SK-N-SH (cell line): ENCODE measurements at regions of chr17 and their contacts with region 1.

Region 1: GRCh38 chr17:76868176-76868668 is at the start of gene MGAT5B:
- DNase-seq: peak; percentile 100
- H3K4me3 ChIP-seq: peak within 1 kb of the TSS; percentile 56 to 74
- H3K27ac ChIP-seq: peak within 1 kb of the TSS in 1 of 2 experiments; percentile 60; a peak in 2 of 4 replicates
- H3K4me1 ChIP-seq: peaks cover 17 to 36% of the 10 kb centered on the region in 2 experiments; a peak in 3 of 4 replicates
- H3K27me3 ChIP-seq: no peaks in the 10 kb centered on the region
- CTCF ChIP-seq: peak; percentile 80
- EP300 ChIP-seq: no peak; a peak in 1 of 4 replicates
- RAD21 ChIP-seq: peak; percentile 93
- polyA plus RNA-seq, gene MGAT5B: 10.3 and 13.8 TPM in 2 replicates

Region 2: DNA sequence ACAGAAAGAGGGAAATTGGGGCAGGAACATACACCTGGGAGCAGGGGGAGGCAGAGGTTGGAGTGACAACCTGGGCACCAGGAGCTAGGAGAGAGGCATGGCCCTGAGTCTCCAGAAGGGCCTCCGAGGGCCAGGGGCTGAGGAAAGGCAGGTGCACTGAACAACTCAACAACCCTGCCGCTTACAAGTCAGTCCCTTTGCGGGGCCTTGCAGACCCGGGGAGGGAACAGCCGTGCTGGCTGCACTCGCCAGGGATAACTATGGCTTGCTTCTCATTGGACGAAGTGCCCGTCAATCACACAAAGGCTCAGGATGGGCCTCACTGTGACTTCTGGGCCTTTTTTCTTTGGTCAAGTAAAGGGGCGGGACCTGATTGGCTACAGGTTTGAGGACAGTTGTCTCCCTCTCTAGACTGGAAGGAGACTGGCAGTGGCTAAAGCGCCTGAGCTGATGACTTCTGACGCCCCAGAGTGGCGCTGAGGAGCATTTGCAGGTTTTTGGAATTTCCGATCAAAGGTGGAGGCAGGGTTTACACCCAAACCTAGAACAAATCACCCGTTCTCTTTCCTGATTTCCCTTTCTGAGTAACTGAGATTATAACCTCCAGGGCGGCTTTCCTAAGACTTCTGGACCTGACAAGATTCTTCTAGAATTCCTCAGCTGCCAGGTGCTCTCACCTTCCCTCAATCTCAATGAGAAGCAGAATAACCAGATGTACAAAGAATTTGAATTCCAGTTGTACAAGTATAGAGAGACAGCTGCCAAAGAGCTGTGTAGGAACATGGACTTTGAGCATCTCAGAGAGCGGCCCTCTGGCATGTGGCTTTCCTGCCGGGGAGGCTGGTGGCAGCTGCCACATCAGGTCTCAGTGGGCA is 255.0 kb before region 1 on chr17:
- CTCF ChIA-PET with region 1: no interaction called
- POLR2A ChIA-PET with region 1: no interaction called
- DNase-seq: no peak
- H3K4me3 ChIP-seq: no peak overlapping the region
- H3K27ac ChIP-seq: no peak overlapping the region
- H3K4me1 ChIP-seq: no peaks in the 10 kb centered on the region; a peak in 1 of 4 replicates
- H3K27me3 ChIP-seq: no peaks in the 10 kb centered on the region; the same call in 1 of the 2 replicates
- CTCF ChIP-seq: no peak
- EP300 ChIP-seq: no peak
- RAD21 ChIP-seq: no peak

Region 3: DNA sequence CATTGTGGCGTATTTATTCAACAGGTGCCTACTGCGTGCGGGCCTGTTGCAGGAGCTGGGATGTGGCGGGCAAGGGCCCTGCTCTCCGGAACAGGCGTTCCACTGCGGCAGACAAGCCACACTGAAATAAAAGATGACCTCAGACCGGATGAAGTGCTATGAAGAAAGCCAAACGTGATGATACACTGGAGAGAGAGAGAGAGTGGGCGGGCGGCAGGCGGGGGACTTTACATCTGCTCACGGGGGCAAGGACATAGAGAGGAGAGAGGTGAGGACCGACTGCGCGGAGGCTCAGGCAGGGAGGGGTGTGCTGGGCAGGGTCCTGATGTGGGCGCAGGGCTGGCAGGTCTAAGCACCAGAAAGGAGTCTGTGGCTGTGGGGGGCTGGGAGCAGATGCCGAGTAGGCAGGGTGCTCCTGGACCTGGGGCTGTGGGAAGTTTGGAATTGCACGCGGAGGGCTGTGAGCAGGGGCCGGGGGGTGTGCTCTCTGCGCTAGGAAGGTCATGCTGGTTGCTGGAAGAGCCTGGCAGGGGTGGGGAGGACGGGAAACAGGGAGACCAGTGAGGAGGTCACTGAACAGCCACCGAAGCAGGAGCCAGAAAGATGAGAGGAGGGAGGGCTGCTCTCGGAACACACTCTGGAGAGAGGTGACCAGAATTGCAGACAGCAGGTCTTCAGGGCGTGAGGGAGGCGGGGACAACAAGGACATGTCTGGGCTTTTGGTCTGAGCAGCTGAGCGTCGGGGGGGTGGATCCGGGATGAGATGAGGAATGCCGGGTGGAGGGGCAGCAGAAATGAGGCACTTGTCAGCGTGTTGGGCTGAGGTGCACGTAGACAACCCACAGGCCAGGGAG is 167.4 kb before region 1 on chr17:
- CTCF ChIA-PET with region 1: no interaction called
- POLR2A ChIA-PET with region 1: no interaction called
- DNase-seq: peak; percentile 85
- H3K4me3 ChIP-seq: peak overlapping the region; percentile 24 to 50
- H3K27ac ChIP-seq: peak overlapping the region; percentile 78 to 84
- H3K4me1 ChIP-seq: peaks cover 26 to 45% of the 10 kb centered on the region in 2 experiments
- H3K27me3 ChIP-seq: no peaks in the 10 kb centered on the region
- CTCF ChIP-seq: no peak
- EP300 ChIP-seq: no peak; a peak in 1 of 4 replicates
- RAD21 ChIP-seq: no peak

Region 4: GRCh38 chr17:76826330-76827068 is 41.7 kb before region 1 on chr17:
- CTCF ChIA-PET with region 1: interaction called, 35 read pairs
- POLR2A ChIA-PET with region 1: no interaction called
- DNase-seq: peak; percentile 53
- H3K4me3 ChIP-seq: no peak overlapping the region
- H3K27ac ChIP-seq: no peak overlapping the region
- H3K4me1 ChIP-seq: peaks cover 0 to 4% of the 10 kb centered on the region in 2 experiments; a peak in 1 of 4 replicates
- H3K27me3 ChIP-seq: no peaks in the 10 kb centered on the region
- CTCF ChIP-seq: no peak
- EP300 ChIP-seq: no peak
- RAD21 ChIP-seq: no peak

Region 5: GRCh38 chr17:76879691-76880090 is 11.5 kb after region 1 on chr17:
- CTCF ChIA-PET with region 1: interaction called, 56 read pairs
- POLR2A ChIA-PET with region 1: interaction called, 4 read pairs
- DNase-seq: no peak
- H3K4me3 ChIP-seq: no peak overlapping the region
- H3K27ac ChIP-seq: no peak overlapping the region
- H3K4me1 ChIP-seq: no peaks in the 10 kb centered on the region
- H3K27me3 ChIP-seq: no peaks in the 10 kb centered on the region
- CTCF ChIP-seq: no peak
- EP300 ChIP-seq: no peak
- RAD21 ChIP-seq: no peak

Region 6: GRCh38 chr17:76924345-76925342 is 56.4 kb after region 1 on chr17:
- CTCF ChIA-PET with region 1: interaction called, 26 read pairs
- POLR2A ChIA-PET with region 1: no interaction called
- DNase-seq: peak; percentile 69
- H3K4me3 ChIP-seq: no peak overlapping the region
- H3K27ac ChIP-seq: no peak overlapping the region
- H3K4me1 ChIP-seq: peaks cover 0 to 12% of the 10 kb centered on the region in 2 experiments; a peak in 1 of 4 replicates
- H3K27me3 ChIP-seq: no peaks in the 10 kb centered on the region
- CTCF ChIP-seq: no peak
- EP300 ChIP-seq: no peak
- RAD21 ChIP-seq: no peak

Region 7: GRCh38 chr17:77011173-77012011 is 143.2 kb after region 1 on chr17:
- CTCF ChIA-PET with region 1: interaction called, 28 read pairs
- POLR2A ChIA-PET with region 1: no interaction called
- DNase-seq: peak; percentile 58
- H3K4me3 ChIP-seq: peak overlapping the region in 1 of 2 experiments; percentile 1; a peak in 1 of 4 replicates
- H3K27ac ChIP-seq: no peak overlapping the region
- H3K4me1 ChIP-seq: no peaks in the 10 kb centered on the region
- H3K27me3 ChIP-seq: no peaks in the 10 kb centered on the region
- CTCF ChIP-seq: peak; percentile 72
- EP300 ChIP-seq: no peak
- RAD21 ChIP-seq: peak; percentile 83

Region 8: DNA sequence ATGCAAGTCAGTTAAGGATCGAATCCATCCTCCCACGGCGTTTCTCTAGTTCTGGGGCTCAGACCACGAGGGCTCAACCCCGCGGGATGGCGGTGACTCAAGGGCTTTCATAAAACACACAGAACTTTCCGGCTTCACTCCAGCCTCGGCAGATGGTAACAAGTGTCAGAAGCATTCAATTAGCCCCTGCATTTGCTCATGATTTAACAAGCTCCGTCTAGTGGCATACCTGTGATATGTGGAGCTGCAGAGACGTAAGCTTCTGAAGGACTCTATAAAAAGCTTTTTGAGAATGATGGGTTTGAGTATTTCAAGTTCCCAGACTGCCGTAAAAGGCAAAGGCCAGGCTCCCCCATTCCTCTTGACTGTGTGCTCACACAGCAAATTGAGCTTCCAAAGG is 181.2 kb after region 1 on chr17:
- CTCF ChIA-PET with region 1: interaction called, 594 read pairs
- POLR2A ChIA-PET with region 1: interaction called, 5 read pairs
- DNase-seq: no peak
- H3K4me3 ChIP-seq: no peak overlapping the region
- H3K27ac ChIP-seq: no peak overlapping the region
- H3K4me1 ChIP-seq: peaks cover 0 to 3% of the 10 kb centered on the region in 2 experiments; a peak in 1 of 4 replicates
- H3K27me3 ChIP-seq: peaks cover 51% of the 10 kb centered on the region
- CTCF ChIP-seq: no peak
- EP300 ChIP-seq: no peak
- RAD21 ChIP-seq: no peak